Ascending aorta (tissue), 2 donors: ENCODE measurements at regions of chr5 and their contacts with region 1.

Region 1: DNA sequence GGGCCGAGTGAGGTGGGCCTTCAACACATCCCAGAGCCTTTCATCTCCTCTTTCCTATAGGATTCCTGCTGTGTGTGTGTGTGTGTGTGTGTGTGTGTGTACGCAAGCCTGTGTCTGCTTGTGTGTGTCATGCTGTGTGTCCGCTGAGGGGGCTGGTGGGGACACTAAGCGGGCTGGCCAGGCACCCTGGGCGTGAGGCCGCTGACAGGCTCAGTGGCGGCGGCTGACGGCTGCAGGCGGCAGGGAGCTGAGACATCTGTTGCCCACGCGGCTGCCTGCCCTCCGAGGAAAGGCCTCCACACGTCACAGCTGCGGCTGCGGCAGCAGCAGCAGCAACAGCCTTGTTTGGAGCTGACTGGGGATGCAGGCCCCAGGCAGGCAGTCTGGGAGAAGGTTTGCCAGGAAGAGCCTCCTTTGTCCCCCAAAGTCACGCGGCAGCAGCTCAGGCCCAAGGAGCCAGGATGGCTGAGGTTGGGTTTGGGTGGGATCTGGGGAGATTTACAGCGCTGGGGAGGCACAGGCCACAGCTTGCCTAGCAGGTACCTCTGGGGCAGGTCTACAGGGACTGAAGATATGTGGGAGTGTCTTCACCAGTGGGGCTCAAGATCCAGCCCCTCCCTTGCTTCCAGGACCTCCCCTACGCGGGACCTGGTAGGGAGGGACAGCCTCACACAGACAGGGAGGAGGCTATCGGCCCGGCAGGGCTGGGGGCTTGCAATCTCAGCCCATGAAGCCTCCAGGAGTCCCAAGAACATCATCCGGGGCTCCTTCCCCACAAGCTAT is 1.8 kb downstream of the PDLIM4 start:
- DNase-seq: peak in 1 of 2 donors; percentile 89
- H3K4me3 ChIP-seq: peak overlapping the region; percentile 62 to 81
- H3K27ac ChIP-seq: peak overlapping the region; percentile 98 to 99
- H3K4me1 ChIP-seq: peaks cover 20 to 60% of the 10 kb centered on the region in 2 donors
- H3K27me3 ChIP-seq: no peaks in the 10 kb centered on the region
- CTCF ChIP-seq: peak in 1 of 3 experiments; percentile 3

Region 2: DNA sequence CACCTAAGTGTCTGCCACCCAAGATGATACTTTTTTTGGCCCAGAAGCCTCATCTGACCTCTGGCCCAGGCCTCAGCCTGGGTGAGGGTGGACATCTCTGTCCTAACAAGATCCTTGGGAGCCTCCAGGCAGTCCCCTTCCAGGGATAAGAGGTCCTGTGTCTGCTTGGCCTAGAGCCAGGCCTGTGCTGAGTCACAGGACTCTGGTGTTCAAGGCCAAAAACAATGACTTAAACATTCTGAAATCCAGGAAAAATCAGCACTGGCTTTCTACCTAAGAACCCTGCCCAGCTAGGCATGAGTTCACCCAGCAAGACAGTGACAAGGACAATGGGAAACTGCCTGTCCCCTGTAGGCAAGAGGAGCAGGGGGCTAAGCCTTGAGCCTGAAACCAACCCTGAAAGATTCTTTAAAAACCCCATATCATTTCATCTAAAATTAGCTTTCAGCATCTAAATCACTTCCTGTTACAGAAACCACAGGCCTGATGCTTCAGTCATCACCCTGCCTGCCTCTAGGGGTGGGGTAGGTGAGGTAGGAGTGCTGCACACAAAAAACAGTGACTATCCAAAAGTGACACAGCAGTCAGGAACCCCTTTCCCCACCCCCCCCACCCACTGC is 155.8 kb before region 1 on chr5:
- intact Hi-C with region 1: loop called (anchors 10 kb)
- DNase-seq: peak; percentile 70 to 96
- H3K4me3 ChIP-seq: no peak overlapping the region
- H3K27ac ChIP-seq: peak overlapping the region; percentile 71 to 72
- H3K4me1 ChIP-seq: peaks cover 9 to 21% of the 10 kb centered on the region in 2 donors
- H3K27me3 ChIP-seq: no peaks in the 10 kb centered on the region
- CTCF ChIP-seq: no peak

Region 3: DNA sequence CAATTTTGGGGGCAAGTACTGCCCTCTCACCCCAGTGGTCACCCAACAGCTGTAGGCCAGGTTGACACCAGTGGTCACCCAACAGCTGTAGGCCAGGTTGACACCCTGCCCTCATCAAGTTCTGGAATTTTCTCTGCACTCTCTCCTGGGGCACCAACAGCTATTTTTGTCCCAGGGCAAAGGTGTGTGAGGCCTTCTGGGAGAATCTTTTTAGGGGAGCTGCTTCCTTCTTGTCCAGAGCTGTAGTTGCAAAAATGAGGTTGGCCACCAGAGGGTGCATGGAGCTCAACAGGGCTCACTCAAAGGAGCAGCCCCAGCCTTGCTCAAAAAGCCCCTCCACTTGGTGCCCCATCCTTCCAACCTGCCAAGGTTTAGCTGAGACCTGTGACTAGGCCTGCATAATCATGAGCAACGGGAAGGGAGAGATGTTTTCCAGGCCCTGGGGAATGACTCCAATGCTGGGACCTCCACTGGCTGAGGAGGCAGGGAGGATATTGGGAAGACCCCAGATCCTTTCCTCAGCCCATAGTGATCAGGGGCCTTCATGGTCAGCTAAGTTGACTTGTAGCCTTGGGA is 21.0 kb before region 1 on chr5:
- intact Hi-C with region 1: loop called (anchors 2 kb)
- DNase-seq: peak in 1 of 2 donors; percentile 90
- H3K4me3 ChIP-seq: no peak overlapping the region
- H3K27ac ChIP-seq: no peak overlapping the region
- H3K4me1 ChIP-seq: no peaks in the 10 kb centered on the region
- H3K27me3 ChIP-seq: no peaks in the 10 kb centered on the region
- CTCF ChIP-seq: peak; percentile 74 to 86 (median 80)

Region 4: DNA sequence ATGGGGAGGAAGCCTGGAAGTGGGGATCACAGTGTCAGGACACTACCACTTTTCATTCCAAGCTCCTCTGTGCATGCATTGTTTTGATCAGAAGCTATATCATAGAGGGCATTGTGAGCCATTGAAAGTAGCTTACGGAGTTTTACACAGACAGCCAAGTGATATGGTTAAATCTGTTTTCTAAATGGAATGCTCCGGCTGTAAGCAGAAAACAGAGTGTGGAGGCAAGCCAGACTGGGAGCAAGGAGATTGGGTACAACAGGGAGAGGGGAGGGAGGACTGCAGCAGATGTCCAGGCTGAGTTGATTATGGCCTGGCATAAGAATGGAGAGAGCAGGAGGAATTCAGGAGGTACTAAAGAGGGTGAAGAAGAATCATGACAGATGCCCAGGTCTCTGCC is 538.4 kb after region 1 on chr5:
- intact Hi-C with region 1: no loop called
- DNase-seq: no peak
- H3K4me3 ChIP-seq: no peak overlapping the region
- H3K27ac ChIP-seq: no peak overlapping the region
- H3K4me1 ChIP-seq: no peaks in the 10 kb centered on the region
- H3K27me3 ChIP-seq: no peaks in the 10 kb centered on the region
- CTCF ChIP-seq: no peak